ENCODE measurements at regions of chr1 and their contacts with region 1.

Region 1: GRCh38 chr1:222465211-222466041 is 82.5 kb downstream of the HHIPL2 start:
- DNase-seq: peak; percentile 96
- H3K4me3 ChIP-seq: peak overlapping the region in 3 of 4 donors; percentile 39 to 48 (median 43)
- H3K27ac ChIP-seq: peak overlapping the region; percentile 69 to 86 (median 77)
- H3K4me1 ChIP-seq: peaks cover 0 to 14% (median 4%) of the 10 kb centered on the region in 4 donors
- H3K27me3 ChIP-seq: no peaks in the 10 kb centered on the region
- CTCF ChIP-seq: peak; percentile 80 to 100 (median 99)
- EP300 ChIP-seq: no peak
- POLR2A ChIP-seq: no peak

Region 2: DNA sequence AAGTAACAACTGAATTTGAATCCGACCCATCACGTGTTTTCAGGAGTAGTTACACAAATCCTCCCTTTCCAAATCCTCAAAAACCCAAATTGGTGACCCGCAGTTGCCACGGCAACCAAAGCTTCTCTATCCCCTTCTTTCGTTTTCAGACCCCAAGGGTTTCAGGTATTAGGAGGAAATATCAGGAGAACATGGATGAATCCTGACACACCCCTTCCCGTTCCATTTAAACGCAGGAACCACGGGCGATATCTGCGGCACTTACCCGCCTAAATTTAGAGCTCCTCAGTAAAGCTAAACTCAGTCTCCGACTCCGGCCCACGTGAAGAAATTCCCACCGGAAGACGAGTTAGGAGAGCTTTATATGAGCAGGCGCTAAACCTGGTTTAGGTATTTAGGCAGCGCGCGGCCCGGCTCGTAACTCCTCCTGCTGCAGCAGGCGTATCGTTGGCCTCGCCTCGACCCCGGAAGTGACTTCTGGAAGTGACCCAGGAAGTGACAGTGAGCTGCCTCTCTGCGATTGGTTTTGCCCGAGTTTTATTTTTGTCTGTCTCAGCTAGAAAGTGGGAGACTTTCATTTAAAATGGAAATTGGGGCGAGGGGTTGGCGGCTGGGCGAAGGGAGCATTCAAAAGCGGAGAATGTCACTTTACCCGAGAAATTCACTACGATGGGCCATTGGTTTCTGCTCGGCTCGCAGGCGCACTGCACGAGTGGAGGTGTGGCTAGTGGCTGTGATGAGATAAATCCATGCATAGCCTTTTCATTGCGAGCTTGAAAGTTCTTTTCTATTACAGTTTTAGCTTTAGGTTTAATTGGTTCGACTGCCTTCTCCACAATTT is 124.3 kb after region 1 on chr1 and contains the start of gene TAF1A:
- intact Hi-C with region 1: loop called (anchors 5 kb)
- DNase-seq: peak; percentile 94
- H3K4me3 ChIP-seq: peak within 1 kb of the TSS; percentile 59 to 70 (median 62)
- H3K27ac ChIP-seq: peak within 1 kb of the TSS; percentile 76 to 82 (median 80)
- H3K4me1 ChIP-seq: peaks cover 0 to 20% (median 16%) of the 10 kb centered on the region in 4 donors
- H3K27me3 ChIP-seq: no peaks in the 10 kb centered on the region
- CTCF ChIP-seq: no peak
- EP300 ChIP-seq: no peak
- POLR2A ChIP-seq: no peak
- total RNA-seq, gene TAF1A: 2.3 to 7.2 (median 4.8) TPM

Region 3: DNA sequence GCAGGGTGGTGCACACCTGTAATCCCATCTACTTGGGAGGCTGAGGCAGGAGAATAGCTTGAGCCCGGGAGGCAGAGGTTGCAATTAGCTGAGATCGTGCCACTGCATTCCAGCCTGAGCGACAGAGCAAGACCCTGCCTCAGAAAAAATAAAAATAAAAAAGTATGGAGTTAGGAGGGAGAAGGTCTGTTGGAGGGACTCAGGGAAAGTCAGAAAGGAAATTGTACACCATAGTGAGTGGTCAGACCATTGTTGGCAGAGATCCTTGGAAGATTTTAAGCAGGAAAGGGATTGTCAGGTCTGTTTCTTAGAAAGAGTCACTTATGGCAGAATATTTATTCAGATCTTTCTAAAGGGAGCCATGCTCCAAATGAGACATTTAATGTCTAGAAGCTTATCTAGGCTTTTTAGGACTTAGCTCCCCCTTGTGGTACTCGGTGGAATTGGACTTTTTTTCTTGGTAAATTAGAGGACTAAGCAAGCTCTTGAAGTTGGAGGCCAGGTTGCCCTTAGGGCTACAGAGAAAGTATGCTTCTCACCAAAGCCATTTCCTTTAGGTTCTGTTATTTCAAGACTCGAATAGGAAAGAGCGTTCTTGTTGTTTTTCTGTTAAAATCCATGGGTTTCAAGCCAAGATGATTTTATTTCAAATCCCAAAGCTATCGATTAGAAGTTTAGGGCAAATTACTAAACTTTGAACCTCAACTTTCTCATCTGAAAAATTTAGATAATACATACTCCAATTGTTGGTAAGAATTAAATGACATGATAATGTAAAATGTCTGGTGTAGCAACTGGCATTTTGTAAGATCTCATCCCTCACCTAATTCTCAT is 169.0 kb after region 1 on chr1:
- intact Hi-C with region 1: loop called (anchors 1 kb)
- DNase-seq: peak; percentile 74
- H3K4me3 ChIP-seq: no peak overlapping the region
- H3K27ac ChIP-seq: peak overlapping the region in 1 of 4 donors; percentile 2
- H3K4me1 ChIP-seq: no peaks in the 10 kb centered on the region
- H3K27me3 ChIP-seq: no peaks in the 10 kb centered on the region
- CTCF ChIP-seq: peak; percentile 74 to 88 (median 80)
- EP300 ChIP-seq: no peak
- POLR2A ChIP-seq: no peak

Region 4: GRCh38 chr1:222713091-222713961 is 247.9 kb after region 1 on chr1:
- intact Hi-C with region 1: loop called (anchors 2 kb)
- DNase-seq: peak; percentile 97
- H3K4me3 ChIP-seq: peak overlapping the region; percentile 60 to 88 (median 69)
- H3K27ac ChIP-seq: peak overlapping the region; percentile 88 to 98 (median 92)
- H3K4me1 ChIP-seq: peaks cover 0 to 42% (median 28%) of the 10 kb centered on the region in 4 donors
- H3K27me3 ChIP-seq: no peaks in the 10 kb centered on the region
- CTCF ChIP-seq: no peak
- EP300 ChIP-seq: no peak
- POLR2A ChIP-seq: no peak

Measured in sigmoid colon (tissue), 7 donors.